ENCODE measurements at regions of chr13 and their contacts with region 1.

Region 1: DNA sequence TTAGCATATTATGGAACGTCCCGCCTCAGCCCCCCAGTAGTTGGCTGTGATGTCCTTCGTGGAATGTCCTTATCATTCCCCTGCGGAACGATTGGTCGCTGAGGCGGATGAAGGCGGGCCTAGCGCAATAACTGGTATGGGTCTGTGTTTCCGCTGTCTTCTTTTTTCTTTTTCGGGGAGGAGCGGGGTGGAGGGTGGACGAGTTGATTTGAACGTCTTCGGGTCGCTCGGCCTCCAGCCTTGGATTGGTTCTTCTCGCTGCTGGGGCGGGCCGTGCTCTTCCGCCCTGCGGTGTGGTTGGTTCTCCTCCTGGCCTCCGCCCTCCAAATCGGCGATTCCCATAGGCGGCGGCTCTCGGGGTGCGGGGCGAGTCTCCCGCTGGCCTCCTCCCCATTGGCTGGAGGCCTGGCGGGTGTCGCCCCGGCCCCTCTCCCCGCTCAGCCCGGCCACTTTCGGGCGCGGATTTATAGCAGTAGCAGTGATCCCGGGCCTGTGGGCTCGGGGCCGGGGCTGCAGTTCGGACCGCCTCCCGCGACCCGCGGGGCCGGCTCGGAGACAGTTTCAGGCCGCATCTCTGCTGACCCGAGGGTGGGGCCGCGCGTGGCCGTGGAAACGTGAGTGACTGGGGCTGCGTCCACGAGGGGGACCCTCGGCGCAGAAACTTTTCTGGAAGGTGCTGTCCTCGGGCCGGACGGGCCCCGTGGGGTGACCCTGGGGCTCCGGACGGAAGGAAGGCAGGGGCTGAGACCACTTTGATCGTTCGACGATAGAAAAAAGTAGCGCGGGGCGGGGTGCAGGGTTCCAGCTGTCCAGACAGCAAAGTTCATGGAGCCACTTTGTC is 2.1 kb downstream of the ING1 start:
- DNase-seq: peak; percentile 93
- H3K4me3 ChIP-seq: peak overlapping the region; percentile 97
- H3K27ac ChIP-seq: peak overlapping the region; percentile 99
- H3K4me1 ChIP-seq: peaks cover 21% of the 10 kb centered on the region
- CTCF ChIP-seq: 0 out of 2 replicates have a peak, but pooled peaks have one; percentile 15

Region 2: GRCh38 chr13:110471833-110472162 is 243.8 kb before region 1 on chr13:
- CTCF ChIA-PET with region 1: no interaction called
- POLR2A ChIA-PET with region 1: no interaction called
- intact Hi-C with region 1: loop called (anchors 5 kb)
- DNase-seq: peak; percentile 79
- H3K4me3 ChIP-seq: no peak overlapping the region
- H3K27ac ChIP-seq: peak overlapping the region; percentile 39
- H3K4me1 ChIP-seq: peaks cover 44% of the 10 kb centered on the region
- CTCF ChIP-seq: no peak

Region 3: GRCh38 chr13:110644892-110645521 is 70.6 kb before region 1 on chr13:
- CTCF ChIA-PET with region 1: no interaction called
- POLR2A ChIA-PET with region 1: interaction called, 3 read pairs
- intact Hi-C with region 1: loop called (anchors 2 kb)
- DNase-seq: peak; percentile 64
- H3K4me3 ChIP-seq: no peak overlapping the region
- H3K27ac ChIP-seq: no peak overlapping the region
- H3K4me1 ChIP-seq: peaks cover 11% of the 10 kb centered on the region
- CTCF ChIP-seq: peak; percentile 66

Region 4: DNA sequence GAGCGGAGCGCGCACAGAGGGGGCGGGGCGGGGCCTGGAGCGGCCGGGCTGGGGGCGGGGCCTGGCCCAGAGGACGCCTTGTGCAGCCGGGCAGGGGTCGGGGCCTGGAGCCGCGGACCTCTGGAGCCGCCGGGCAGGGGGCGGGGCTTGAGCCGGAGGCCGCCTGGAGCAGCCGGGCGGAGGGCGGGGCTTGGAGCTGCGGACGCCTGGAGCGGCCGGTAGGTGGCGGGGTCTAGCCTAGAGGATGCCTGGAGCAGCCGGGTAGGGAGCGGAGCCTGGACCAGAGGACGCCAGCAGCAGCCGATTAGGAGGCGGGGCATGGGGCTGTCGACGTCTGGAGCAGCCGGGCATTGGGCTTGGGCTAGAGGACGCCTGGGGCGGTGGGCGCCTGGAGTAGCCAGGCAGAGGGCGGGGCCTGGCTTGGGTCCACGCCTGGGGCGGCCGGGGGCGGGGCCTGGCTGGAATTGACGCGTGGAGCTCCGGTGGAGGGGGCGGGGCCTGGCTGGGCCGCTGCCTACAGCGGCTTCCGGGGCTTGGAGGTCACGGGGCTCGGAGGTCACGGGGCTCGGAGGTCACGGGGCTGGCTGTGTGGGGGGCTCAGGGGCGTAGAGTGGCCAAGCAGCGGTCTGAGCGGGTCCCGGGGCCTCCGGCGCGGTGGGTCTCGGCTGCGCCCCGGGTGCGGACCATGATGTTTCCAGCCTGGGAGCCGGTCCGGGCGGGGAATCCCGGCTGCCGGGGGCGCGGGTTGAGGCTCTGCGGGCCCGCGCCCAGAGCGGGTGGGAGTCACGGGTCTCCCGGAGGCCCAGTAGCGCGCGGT is 199.7 kb after region 1 on chr13 and contains the start of gene ANKRD10:
- CTCF ChIA-PET with region 1: no interaction called
- POLR2A ChIA-PET with region 1: interaction called, 5 read pairs
- intact Hi-C with region 1: loop called (anchors 2 kb)
- DNase-seq: peak; percentile 89
- H3K4me3 ChIP-seq: peak within 1 kb of the TSS; percentile 98
- H3K27ac ChIP-seq: peak within 1 kb of the TSS; percentile 90
- H3K4me1 ChIP-seq: peaks cover 18% of the 10 kb centered on the region
- CTCF ChIP-seq: peak; percentile 66
- total RNA-seq, gene ANKRD10: 53.2 and 82.8 TPM in 2 replicates